ENCODE measurements at regions of chr5 and their contacts with region 1.

Region 1: GRCh38 chr5:175696139-175696854 is 38.4 kb downstream of the HRH2 start:
- DNase-seq: peak; percentile 21 to 83 (median 71)
- ATAC-seq: peak; percentile 70
- H3K4me3 ChIP-seq: no peak overlapping the region
- H3K4me3 Mint-ChIP-seq: no peak overlapping the region
- H3K27ac ChIP-seq: no peak overlapping the region
- H3K27ac Mint-ChIP-seq: peak overlapping the region; percentile 76
- H3K4me1 ChIP-seq: peaks cover 11% of the 10 kb centered on the region
- H3K4me1 Mint-ChIP-seq: peaks cover 28% of the 10 kb centered on the region
- H3K27me3 ChIP-seq: no peaks in the 10 kb centered on the region
- H3K27me3 Mint-ChIP-seq: no peaks in the 10 kb centered on the region
- CTCF ChIP-seq: peak; percentile 57

Region 2: GRCh38 chr5:174610994-174611643 is 1085.2 kb before region 1 on chr5:
- CTCF ChIA-PET with region 1: no interaction called
- POLR2A ChIA-PET with region 1: no interaction called
- intact Hi-C with region 1: no loop called
- DNase-seq: no peak
- ATAC-seq: no peak
- H3K4me3 ChIP-seq: no peak overlapping the region
- H3K4me3 Mint-ChIP-seq: no peak overlapping the region
- H3K27ac ChIP-seq: no peak overlapping the region
- H3K27ac Mint-ChIP-seq: no peak overlapping the region
- H3K4me1 ChIP-seq: no peaks in the 10 kb centered on the region
- H3K4me1 Mint-ChIP-seq: no peaks in the 10 kb centered on the region
- H3K27me3 ChIP-seq: no peaks in the 10 kb centered on the region
- H3K27me3 Mint-ChIP-seq: peaks cover 18% of the 10 kb centered on the region
- CTCF ChIP-seq: no peak

Region 3: GRCh38 chr5:175681045-175681967 is 15.0 kb before region 1 on chr5:
- CTCF ChIA-PET with region 1: interaction called, 10 read pairs
- POLR2A ChIA-PET with region 1: no interaction called
- intact Hi-C with region 1: no loop called
- DNase-seq: no peak
- ATAC-seq: no peak
- H3K4me3 ChIP-seq: no peak overlapping the region
- H3K4me3 Mint-ChIP-seq: no peak overlapping the region
- H3K27ac ChIP-seq: no peak overlapping the region
- H3K27ac Mint-ChIP-seq: no peak overlapping the region
- H3K4me1 ChIP-seq: peaks cover 21% of the 10 kb centered on the region
- H3K4me1 Mint-ChIP-seq: peaks cover 36% of the 10 kb centered on the region
- H3K27me3 ChIP-seq: no peaks in the 10 kb centered on the region
- H3K27me3 Mint-ChIP-seq: no peaks in the 10 kb centered on the region
- CTCF ChIP-seq: no peak

Region 4: DNA sequence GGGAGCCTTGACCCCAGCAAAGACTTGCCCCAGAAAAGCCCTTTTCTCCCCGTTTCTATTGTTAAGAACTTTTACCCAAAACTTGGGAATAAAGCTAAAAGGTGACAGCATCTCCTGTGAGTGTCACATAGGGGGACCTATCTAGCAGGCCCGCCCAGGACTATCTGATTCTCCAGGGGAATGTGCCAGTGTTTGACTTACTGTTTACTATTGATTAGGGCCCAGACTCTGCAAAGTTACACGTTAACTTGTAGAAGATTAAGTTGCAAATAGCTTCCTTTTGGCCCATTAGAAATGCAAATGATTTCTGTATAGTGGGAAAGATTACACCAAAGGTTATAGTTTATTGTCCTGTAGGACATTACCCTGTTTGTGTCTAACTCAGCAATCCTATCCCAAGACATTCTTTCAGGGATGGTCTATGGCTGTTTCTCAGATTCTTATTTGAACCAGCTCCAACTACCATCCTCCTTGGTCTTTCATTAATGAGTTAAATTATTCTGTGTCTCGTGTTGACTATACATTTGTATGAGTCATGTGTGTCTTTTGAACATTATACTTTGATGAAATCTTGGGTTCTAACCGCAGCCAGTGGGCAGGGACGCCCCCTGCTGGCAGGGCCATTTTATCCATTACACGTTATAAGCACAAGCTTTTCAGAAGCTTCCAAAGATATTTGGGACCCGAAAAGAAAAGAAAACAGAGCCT is 22.3 kb after region 1 on chr5:
- CTCF ChIA-PET with region 1: interaction called, 12 read pairs
- POLR2A ChIA-PET with region 1: no interaction called
- intact Hi-C with region 1: no loop called
- DNase-seq: peak in 7 of 9 experiments; percentile 39 to 58 (median 51)
- ATAC-seq: peak; percentile 46
- H3K4me3 ChIP-seq: no peak overlapping the region
- H3K4me3 Mint-ChIP-seq: no peak overlapping the region
- H3K27ac ChIP-seq: no peak overlapping the region
- H3K27ac Mint-ChIP-seq: no peak overlapping the region
- H3K4me1 ChIP-seq: no peaks in the 10 kb centered on the region
- H3K4me1 Mint-ChIP-seq: no peaks in the 10 kb centered on the region
- H3K27me3 ChIP-seq: no peaks in the 10 kb centered on the region
- H3K27me3 Mint-ChIP-seq: no peaks in the 10 kb centered on the region
- CTCF ChIP-seq: peak; percentile 57